Breast epithelium (tissue), 4 donors: ENCODE measurements at regions of chr19 and their contacts with region 1.

Region 1: DNA sequence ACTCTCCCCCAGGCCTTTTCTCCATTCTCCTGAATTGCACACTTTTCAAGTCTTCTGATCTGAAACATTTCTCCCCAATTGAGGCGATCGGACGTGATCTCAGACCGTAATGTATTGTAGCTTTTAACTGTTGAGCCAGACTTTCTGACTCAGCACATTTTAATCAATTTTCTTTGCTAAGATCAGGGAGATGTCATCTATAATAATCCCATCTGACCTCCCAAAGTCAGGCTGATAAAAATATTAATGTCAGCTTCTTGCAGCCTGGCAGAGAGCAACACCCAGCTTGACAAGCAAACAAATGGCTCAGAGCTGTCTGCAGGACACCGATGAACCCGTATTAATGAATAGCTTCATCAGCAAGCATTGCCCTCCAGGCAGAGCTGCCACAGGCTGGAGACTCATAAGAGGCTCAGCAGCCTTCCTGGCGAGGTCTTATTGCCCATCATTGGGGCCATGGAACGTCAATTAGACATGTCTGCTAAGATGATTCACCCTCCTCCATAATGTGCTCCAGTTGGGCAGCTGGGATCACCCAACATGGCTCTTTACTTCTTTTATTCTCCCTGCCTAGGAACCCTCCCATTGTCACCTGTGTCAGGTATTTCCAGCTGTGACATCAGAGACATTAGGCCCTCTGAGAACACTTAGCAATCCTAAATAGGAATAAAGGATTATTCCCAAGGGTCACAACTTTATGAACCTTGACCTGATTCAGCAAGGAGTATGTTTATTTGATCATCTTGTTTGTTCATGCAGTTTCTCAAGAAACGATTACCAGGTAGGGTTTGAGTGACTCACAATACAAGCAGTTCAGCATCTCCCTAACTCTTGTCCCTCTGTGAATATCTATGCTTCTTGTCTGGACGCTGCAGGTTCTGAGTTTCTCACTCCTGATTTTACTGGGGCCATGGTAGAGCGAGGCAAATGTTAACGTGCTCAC is 60.4 kb upstream of the UQCRFS1 start:
- DNase-seq: no peak
- H3K4me3 ChIP-seq: no peak overlapping the region
- H3K27ac ChIP-seq: no peak overlapping the region
- H3K4me1 ChIP-seq: no peaks in the 10 kb centered on the region
- H3K27me3 ChIP-seq: peaks cover 0 to 26% of the 10 kb centered on the region in 2 donors
- CTCF ChIP-seq: no peak
- POLR2A ChIP-seq: no peak

Region 2: DNA sequence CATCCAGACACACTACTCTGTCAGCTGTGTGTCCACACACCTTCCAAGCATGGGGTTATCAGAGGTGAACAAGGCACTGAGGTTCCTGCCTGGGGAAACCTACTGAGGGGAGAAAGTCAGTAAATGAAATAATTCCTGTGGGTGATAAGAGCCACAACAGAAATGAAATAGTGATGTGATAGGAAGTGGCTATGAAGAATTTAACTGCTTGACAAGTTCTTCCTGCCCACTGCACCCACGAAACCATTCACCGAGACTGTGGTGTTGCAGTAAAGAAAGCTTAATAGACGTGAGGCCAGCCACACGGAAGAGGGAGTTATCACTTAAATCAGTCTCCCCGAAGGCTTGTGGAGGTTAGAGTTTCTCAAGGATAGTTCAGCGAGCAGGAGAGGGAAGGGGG is 413.5 kb before region 1 on chr19:
- intact Hi-C with region 1: loop called (anchors 5 kb)
- DNase-seq: no peak
- H3K4me3 ChIP-seq: no peak overlapping the region
- H3K27ac ChIP-seq: no peak overlapping the region
- H3K4me1 ChIP-seq: no peaks in the 10 kb centered on the region
- H3K27me3 ChIP-seq: no peaks in the 10 kb centered on the region
- CTCF ChIP-seq: no peak
- POLR2A ChIP-seq: no peak